ENCODE measurements at regions of chr6 and their contacts with region 1.

Region 1: GRCh38 chr6:722077-722524 is 29.2 kb upstream of the EXOC2 start:
- DNase-seq: peak; percentile 55 to 69 (median 58)
- H3K4me3 ChIP-seq: no peak overlapping the region
- H3K4me3 Mint-ChIP-seq: peak overlapping the region in 2 of 8 donors; percentile 7 to 52
- H3K27ac ChIP-seq: no peak overlapping the region
- H3K27ac Mint-ChIP-seq: no peak overlapping the region
- H3K4me1 ChIP-seq: peaks cover 7% of the 10 kb centered on the region
- H3K4me1 Mint-ChIP-seq: peaks cover 0 to 9% (median 4%) of the 10 kb centered on the region in 4 donors
- H3K27me3 ChIP-seq: no peaks in the 10 kb centered on the region
- H3K27me3 Mint-ChIP-seq: peaks cover 8 to 10% of the 10 kb centered on the region in 2 donors

Region 2: DNA sequence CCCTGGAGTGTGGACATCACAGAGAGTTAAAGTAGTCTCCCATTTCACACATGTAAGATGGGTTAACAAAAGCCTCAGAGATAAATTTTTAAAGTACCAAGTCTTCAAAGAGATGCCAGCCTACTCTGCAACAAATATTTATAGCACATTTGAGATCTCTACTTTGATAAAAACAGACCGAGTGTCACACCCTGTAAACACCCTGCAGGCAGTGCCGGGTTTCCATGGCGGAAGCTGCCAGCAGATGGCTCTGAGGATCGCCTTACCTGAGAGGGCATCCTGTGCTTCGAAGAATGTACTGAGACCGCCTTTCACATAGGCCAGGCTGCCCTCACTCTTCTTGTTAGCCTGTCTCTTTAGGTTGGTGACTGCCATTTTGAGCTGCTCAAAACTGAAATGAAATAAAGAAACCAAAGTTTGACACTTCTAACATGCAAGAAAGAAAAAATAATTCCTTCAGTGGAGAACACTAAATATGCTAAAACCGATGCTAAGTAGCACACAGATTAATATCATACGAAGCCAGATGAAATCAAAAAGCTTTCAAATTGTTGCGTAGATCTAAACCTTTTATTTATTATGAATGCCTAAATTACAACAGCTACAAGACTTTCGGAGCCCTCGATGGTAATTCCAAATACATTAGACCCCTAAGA is 104.5 kb before region 1 on chr6:
- CTCF ChIA-PET with region 1: no interaction called
- POLR2A ChIA-PET with region 1: no interaction called
- intact Hi-C with region 1: loop called (anchors 5 kb)
- DNase-seq: peak in 4 of 5 donors; percentile 2 to 25 (median 8)
- H3K4me3 ChIP-seq: no peak overlapping the region
- H3K4me3 Mint-ChIP-seq: no peak overlapping the region
- H3K27ac ChIP-seq: no peak overlapping the region
- H3K27ac Mint-ChIP-seq: peak overlapping the region in 3 of 7 donors; percentile 3 to 38 (median 13)
- H3K4me1 ChIP-seq: no peaks in the 10 kb centered on the region
- H3K4me1 Mint-ChIP-seq: peaks cover 0 to 10% (median 7%) of the 10 kb centered on the region in 4 donors
- H3K27me3 ChIP-seq: no peaks in the 10 kb centered on the region
- H3K27me3 Mint-ChIP-seq: no peaks in the 10 kb centered on the region

Region 3: GRCh38 chr6:683742-684440 is 38.2 kb before region 1 on chr6:
- CTCF ChIA-PET with region 1: interaction called, 10 read pairs
- POLR2A ChIA-PET with region 1: no interaction called
- intact Hi-C with region 1: no loop called
- DNase-seq: no peak
- H3K4me3 ChIP-seq: no peak overlapping the region
- H3K4me3 Mint-ChIP-seq: peak overlapping the region in 4 of 8 donors; percentile 36 to 62 (median 46)
- H3K27ac ChIP-seq: no peak overlapping the region
- H3K27ac Mint-ChIP-seq: peak overlapping the region in 2 of 7 donors; percentile 33 to 88
- H3K4me1 ChIP-seq: peaks cover 58% of the 10 kb centered on the region
- H3K4me1 Mint-ChIP-seq: peaks cover 39 to 56% (median 47%) of the 10 kb centered on the region in 4 donors
- H3K27me3 ChIP-seq: no peaks in the 10 kb centered on the region
- H3K27me3 Mint-ChIP-seq: no peaks in the 10 kb centered on the region

Region 4: DNA sequence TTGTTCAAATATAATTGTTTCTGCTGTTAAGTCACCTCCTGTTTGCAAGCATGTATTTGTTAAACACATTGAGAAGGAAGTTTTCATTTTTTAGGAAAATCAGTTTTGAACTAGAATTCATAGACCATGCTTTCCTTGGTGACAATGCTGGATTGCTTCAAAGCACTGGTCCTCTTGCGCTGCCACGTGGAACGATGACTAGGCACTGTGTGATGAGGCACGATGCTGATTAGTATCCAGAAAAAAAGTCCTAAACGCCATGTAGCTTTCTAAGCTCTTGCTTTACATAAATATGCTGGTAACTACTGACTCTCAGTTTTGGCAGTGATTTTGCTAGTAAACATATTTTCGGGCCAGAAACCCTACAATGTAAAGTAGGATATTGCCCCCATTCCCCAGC is 18.1 kb before region 1 on chr6:
- CTCF ChIA-PET with region 1: interaction called, 14 read pairs
- POLR2A ChIA-PET with region 1: no interaction called
- intact Hi-C with region 1: no loop called
- DNase-seq: no peak
- H3K4me3 ChIP-seq: no peak overlapping the region
- H3K4me3 Mint-ChIP-seq: no peak overlapping the region
- H3K27ac ChIP-seq: no peak overlapping the region
- H3K27ac Mint-ChIP-seq: no peak overlapping the region
- H3K4me1 ChIP-seq: no peaks in the 10 kb centered on the region
- H3K4me1 Mint-ChIP-seq: peaks cover 0 to 1% (median 0%) of the 10 kb centered on the region in 4 donors
- H3K27me3 ChIP-seq: no peaks in the 10 kb centered on the region
- H3K27me3 Mint-ChIP-seq: peaks cover 7 to 9% of the 10 kb centered on the region in 2 donors

Region 5: DNA sequence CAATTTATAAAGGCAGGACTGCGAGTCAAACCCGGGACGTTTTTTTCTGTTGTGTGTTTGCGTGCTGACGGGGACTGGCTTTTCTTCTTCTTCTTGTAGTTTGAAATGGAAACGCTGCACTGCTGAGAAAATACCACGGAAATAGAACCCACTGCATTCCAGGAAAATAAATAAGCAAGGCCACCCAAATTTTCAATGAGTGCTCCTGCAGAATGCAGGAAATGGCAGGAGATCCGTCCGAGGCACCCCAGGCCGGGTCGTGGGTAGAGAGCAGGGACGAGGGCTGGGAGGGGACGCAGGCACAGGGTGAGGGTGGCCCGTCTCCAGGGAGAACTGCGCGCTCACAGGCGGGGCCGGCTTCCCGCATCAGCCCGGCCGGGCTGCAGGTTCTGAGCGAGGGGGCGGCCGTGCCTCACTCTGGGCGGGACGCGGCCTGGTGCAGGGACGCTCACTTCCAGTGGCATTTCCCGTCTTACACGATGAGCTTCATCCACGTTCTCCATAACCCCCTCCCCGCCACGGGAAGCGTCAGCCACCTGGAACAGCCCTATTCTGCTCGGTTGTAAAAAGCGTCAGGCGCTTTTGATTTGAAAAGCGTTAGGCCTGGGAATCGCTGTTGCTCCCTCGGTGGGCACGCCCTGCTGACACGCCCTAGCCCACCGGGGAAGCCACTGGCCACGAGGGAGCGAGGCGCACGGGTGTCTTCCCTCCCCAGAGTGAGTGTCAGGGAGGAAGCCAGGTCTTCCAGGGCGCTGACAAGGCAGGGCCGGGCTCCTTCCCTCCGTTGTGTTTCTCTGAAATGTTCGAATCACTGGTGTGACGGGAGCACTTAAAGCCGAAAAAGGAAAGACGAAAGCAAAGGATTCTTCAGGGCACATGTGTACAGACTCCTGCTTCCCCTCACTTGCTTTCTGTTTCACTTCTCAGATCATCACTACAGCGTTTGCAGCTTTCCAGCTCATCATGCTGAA is 11.2 kb before region 1 on chr6:
- CTCF ChIA-PET with region 1: interaction called, 26 read pairs
- POLR2A ChIA-PET with region 1: interaction called, 11 read pairs
- intact Hi-C with region 1: no loop called
- DNase-seq: peak; percentile 58 to 68 (median 63)
- H3K4me3 ChIP-seq: peak overlapping the region; percentile 50 to 81
- H3K4me3 Mint-ChIP-seq: peak overlapping the region; percentile 96 to 99 (median 99)
- H3K27ac ChIP-seq: peak overlapping the region; percentile 84
- H3K27ac Mint-ChIP-seq: peak overlapping the region; percentile 93 to 100 (median 98)
- H3K4me1 ChIP-seq: peaks cover 15% of the 10 kb centered on the region
- H3K4me1 Mint-ChIP-seq: peaks cover 12 to 24% (median 18%) of the 10 kb centered on the region in 4 donors
- H3K27me3 ChIP-seq: no peaks in the 10 kb centered on the region
- H3K27me3 Mint-ChIP-seq: peaks cover 7 to 9% of the 10 kb centered on the region in 2 donors

Region 6: GRCh38 chr6:1396952-1397868 is 675.1 kb after region 1 on chr6:
- CTCF ChIA-PET with region 1: no interaction called
- POLR2A ChIA-PET with region 1: no interaction called
- intact Hi-C with region 1: loop called (anchors 5 kb)
- DNase-seq: peak; percentile 54 to 63 (median 60)
- H3K4me3 ChIP-seq: no peak overlapping the region
- H3K4me3 Mint-ChIP-seq: peak overlapping the region in 5 of 8 donors; percentile 0 to 62 (median 31)
- H3K27ac ChIP-seq: no peak overlapping the region
- H3K27ac Mint-ChIP-seq: peak overlapping the region in 2 of 7 donors; percentile 30 to 37
- H3K4me1 ChIP-seq: no peaks in the 10 kb centered on the region
- H3K4me1 Mint-ChIP-seq: peaks cover 5 to 18% (median 10%) of the 10 kb centered on the region in 4 donors
- H3K27me3 ChIP-seq: peaks cover 24% of the 10 kb centered on the region
- H3K27me3 Mint-ChIP-seq: peaks cover 42 to 49% of the 10 kb centered on the region in 2 donors

Region 7: GRCh38 chr6:1436334-1437306 is 714.5 kb after region 1 on chr6:
- CTCF ChIA-PET with region 1: no interaction called
- POLR2A ChIA-PET with region 1: no interaction called
- intact Hi-C with region 1: loop called (anchors 2 kb)
- DNase-seq: peak; percentile 50 to 56 (median 52)
- H3K4me3 ChIP-seq: no peak overlapping the region
- H3K4me3 Mint-ChIP-seq: no peak overlapping the region
- H3K27ac ChIP-seq: no peak overlapping the region
- H3K27ac Mint-ChIP-seq: no peak overlapping the region
- H3K4me1 ChIP-seq: no peaks in the 10 kb centered on the region
- H3K4me1 Mint-ChIP-seq: peaks cover 0 to 3% (median under 1%) of the 10 kb centered on the region in 4 donors
- H3K27me3 ChIP-seq: no peaks in the 10 kb centered on the region
- H3K27me3 Mint-ChIP-seq: peaks cover 31 to 35% of the 10 kb centered on the region in 2 donors